ENCODE measurements at regions of chr3 and their contacts with region 1.

Region 1: GRCh38 chr3:129942296-129942695 is 32.2 kb upstream of the TRH start:
- DNase-seq: no peak
- H3K4me3 ChIP-seq: no peak overlapping the region
- CTCF ChIP-seq: peak; percentile 82

Region 2: DNA sequence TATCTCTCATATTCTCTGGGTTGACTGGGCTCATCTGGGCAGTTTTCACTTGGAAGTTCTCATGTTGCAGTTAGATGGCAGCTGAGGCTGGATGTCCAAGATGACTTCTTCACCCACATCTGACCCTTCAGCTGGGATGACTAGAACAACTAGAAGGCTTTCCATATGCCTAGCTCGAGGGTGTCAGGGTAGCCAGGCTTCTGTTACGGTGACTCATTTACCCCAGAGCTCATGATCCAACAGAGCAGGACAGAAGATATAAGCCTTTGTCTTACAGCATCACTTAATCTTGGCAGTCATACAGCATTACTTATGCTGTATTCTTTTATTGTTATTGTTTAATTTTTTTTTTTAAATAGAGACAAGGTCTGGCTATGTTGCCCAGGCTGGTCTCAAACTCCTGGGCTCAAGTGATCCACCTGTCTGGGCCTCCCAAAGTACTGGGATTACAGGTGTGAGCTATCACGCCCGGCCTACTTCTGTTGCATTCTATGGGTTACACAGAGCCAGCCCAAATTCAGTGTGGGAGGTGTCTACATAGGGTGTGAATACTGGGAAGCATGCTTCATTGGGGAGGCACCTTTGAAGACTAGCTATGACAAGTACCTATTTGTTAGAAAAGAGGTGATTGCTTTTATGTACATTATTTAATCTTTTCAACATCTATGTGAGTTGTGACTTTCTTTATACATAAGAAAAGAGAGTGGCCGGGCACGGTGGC is 652.9 kb before region 1 on chr3:
- CTCF ChIA-PET with region 1: no interaction called
- POLR2A ChIA-PET with region 1: no interaction called
- DNase-seq: no peak
- H3K4me3 ChIP-seq: no peak overlapping the region
- CTCF ChIP-seq: no peak

Region 3: DNA sequence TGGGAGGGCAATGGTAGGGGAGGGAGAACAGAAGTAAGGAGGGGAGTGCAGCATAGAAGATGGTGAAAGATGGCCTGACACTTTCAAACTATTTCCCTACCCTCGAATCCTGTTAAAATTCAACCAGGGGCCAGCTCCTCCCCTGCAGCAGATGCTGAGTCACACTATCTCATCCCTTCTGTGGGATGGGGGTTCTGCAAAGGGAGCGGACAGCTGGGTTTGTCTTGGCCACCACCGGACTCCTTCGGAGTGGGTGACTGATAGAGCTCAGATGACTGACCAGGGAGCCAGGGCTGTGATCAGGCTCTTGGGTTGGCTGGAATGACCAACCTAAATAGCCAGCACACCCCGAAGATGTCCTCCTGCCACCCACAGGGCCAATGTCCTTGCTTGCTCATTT is 15.2 kb before region 1 on chr3:
- CTCF ChIA-PET with region 1: interaction called, 11 read pairs
- POLR2A ChIA-PET with region 1: no interaction called
- DNase-seq: no peak
- H3K4me3 ChIP-seq: no peak overlapping the region
- CTCF ChIP-seq: no peak

Region 4: GRCh38 chr3:129961134-129961541 is 18.8 kb after region 1 on chr3:
- CTCF ChIA-PET with region 1: interaction called, 16 read pairs
- POLR2A ChIA-PET with region 1: no interaction called
- DNase-seq: no peak
- H3K4me3 ChIP-seq: no peak overlapping the region
- CTCF ChIP-seq: no peak

Region 5: GRCh38 chr3:129984125-129984524 is 41.8 kb after region 1 on chr3:
- CTCF ChIA-PET with region 1: interaction called, 11 read pairs
- POLR2A ChIA-PET with region 1: no interaction called
- DNase-seq: no peak
- H3K4me3 ChIP-seq: no peak overlapping the region
- CTCF ChIP-seq: no peak

Region 6: DNA sequence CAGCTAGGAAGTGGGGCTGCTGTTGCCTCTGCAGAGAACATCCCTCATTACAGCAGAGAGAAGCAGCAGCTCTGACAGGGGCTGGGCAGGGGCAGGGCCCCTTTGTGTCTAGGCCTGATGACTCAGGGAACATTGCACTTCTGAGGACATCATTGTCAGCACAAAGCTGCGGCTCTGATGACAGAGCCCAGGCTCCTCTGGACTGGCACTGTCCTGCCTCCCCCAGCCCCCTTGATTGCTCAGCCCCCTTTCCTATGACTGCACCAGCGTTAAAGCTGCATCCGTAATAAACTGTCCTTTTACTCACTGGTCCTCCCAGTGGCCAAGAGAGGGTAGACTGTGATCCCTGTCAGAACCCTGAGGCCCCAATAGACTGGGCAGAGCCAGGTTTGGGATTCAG is 50.5 kb after region 1 on chr3:
- CTCF ChIA-PET with region 1: interaction called, 19 read pairs
- POLR2A ChIA-PET with region 1: no interaction called
- DNase-seq: no peak
- H3K4me3 ChIP-seq: no peak overlapping the region
- CTCF ChIP-seq: peak; percentile 49

Region 7: GRCh38 chr3:130093741-130094391 is 151.6 kb after region 1 on chr3:
- CTCF ChIA-PET with region 1: interaction called, 396 read pairs
- POLR2A ChIA-PET with region 1: no interaction called
- DNase-seq: no peak
- H3K4me3 ChIP-seq: no peak overlapping the region
- CTCF ChIP-seq: no peak

Region 8: DNA sequence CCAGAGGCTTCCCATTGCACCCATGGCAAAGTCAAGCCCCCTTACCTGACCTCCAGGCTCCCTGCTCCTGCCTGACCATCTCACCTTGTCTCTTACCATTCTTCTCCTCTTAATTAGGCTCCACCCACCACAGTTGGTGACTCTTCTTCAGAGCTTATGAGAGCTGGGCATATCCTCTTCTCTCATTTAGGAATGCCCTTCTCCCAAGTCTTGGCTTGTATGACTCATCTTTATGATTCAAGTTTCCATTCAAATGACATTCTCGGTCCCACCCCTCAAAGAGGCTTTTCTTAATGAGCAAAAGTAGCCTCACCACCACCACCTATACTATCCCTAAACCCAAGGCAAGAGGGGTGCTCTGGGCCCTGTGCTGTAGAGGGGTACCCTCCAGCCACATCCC is 1384.0 kb after region 1 on chr3:
- CTCF ChIA-PET with region 1: no interaction called
- POLR2A ChIA-PET with region 1: no interaction called
- DNase-seq: no peak
- H3K4me3 ChIP-seq: no peak overlapping the region
- CTCF ChIP-seq: no peak

Measured in AG04449 (cell line).